B cell (primary cell): ENCODE measurements at regions of chr3 and their contacts with region 1.

Region 1: GRCh38 chr3:4113811-4114522 is 189.2 kb upstream of the SETMAR start:
- DNase-seq: no peak
- ATAC-seq: no peak
- H3K4me3 ChIP-seq: no peak overlapping the region
- H3K4me3 Mint-ChIP-seq: no peak overlapping the region
- H3K27ac ChIP-seq: no peak overlapping the region
- H3K27ac Mint-ChIP-seq: no peak overlapping the region
- H3K4me1 ChIP-seq: no peaks in the 10 kb centered on the region
- H3K4me1 Mint-ChIP-seq: peaks cover 5% of the 10 kb centered on the region
- H3K27me3 ChIP-seq: no peaks in the 10 kb centered on the region
- H3K27me3 Mint-ChIP-seq: no peaks in the 10 kb centered on the region
- CTCF ChIP-seq: no peak

Region 2: GRCh38 chr3:3851621-3852323 is 262.2 kb before region 1 on chr3:
- CTCF ChIA-PET with region 1: no interaction called
- POLR2A ChIA-PET with region 1: no interaction called
- intact Hi-C with region 1: no loop called
- DNase-seq: peak; percentile 9
- ATAC-seq: no peak
- H3K4me3 ChIP-seq: no peak overlapping the region
- H3K4me3 Mint-ChIP-seq: no peak overlapping the region
- H3K27ac ChIP-seq: no peak overlapping the region
- H3K27ac Mint-ChIP-seq: no peak overlapping the region
- H3K4me1 ChIP-seq: peaks cover 0 to 3% of the 10 kb centered on the region in 2 donors
- H3K4me1 Mint-ChIP-seq: peaks cover 7% of the 10 kb centered on the region
- H3K27me3 ChIP-seq: no peaks in the 10 kb centered on the region
- H3K27me3 Mint-ChIP-seq: no peaks in the 10 kb centered on the region
- CTCF ChIP-seq: no peak

Region 3: GRCh38 chr3:4065085-4065484 is 48.9 kb before region 1 on chr3:
- CTCF ChIA-PET with region 1: no interaction called
- POLR2A ChIA-PET with region 1: no interaction called
- intact Hi-C with region 1: loop called (anchors 5 kb)
- DNase-seq: peak; percentile 84
- ATAC-seq: peak; percentile 87
- H3K4me3 ChIP-seq: peak overlapping the region in 1 of 5 experiments; percentile 8
- H3K4me3 Mint-ChIP-seq: peak overlapping the region; percentile 33
- H3K27ac ChIP-seq: no peak overlapping the region
- H3K27ac Mint-ChIP-seq: peak overlapping the region; percentile 79
- H3K4me1 ChIP-seq: peaks cover 84 to 87% of the 10 kb centered on the region in 2 donors
- H3K4me1 Mint-ChIP-seq: peaks cover 89% of the 10 kb centered on the region
- H3K27me3 ChIP-seq: no peaks in the 10 kb centered on the region
- H3K27me3 Mint-ChIP-seq: no peaks in the 10 kb centered on the region
- CTCF ChIP-seq: no peak